ENCODE measurements at regions of chr2 and their contacts with region 1.

Region 1: DNA sequence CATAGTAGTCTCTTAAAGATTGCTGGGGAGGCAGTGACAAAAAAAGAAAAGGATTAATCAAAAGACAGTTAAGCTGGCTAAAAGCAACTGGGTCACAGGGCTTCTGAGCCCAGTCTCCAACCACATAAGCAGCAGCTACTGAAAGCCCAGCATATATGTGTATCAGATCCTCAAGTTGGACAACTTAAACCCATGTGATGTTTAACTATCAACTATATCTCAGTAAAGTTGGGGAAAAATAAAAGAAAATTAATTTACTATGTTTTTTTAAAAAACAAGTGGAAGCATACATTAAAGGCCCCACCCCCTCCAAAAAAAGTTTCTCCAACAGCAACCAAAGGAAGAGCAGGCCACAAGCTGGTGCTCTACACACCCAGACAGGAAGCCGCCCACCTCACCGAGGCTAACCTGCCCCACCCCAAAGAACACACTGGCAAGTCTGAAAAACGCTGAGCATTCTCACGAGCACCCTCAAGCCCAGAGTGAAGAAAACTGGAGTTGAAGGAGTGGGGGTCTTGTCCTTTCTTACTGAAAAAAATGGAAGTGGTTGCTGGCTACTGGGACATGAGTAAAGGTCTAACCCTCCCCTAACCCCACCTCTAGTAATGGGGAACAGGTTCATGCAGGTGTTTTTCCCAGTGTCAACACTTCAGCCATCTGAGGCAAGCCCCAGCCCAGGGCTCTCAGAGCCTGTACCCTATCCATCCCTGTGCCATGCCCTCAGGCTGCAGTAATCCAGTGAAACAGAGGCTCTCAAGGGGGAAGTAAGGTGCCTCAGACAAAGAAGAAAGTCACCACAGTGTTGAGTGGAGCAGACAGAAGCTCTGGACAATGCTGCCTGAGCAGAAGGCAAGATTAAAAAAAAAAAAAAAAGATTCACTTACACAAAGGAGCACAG is 106.3 kb downstream of the GYPC start:
- DNase-seq: peak; percentile 86
- ATAC-seq: peak; percentile 95
- H3K4me3 Mint-ChIP-seq: peak overlapping the region; percentile 20
- H3K27ac Mint-ChIP-seq: peak overlapping the region; percentile 86
- H3K4me1 Mint-ChIP-seq: peaks cover 48% of the 10 kb centered on the region
- H3K27me3 Mint-ChIP-seq: no peaks in the 10 kb centered on the region
- CTCF ChIP-seq: no peak

Region 2: GRCh38 chr2:124959582-124959981 is 1802.6 kb before region 1 on chr2:
- CTCF ChIA-PET with region 1: no interaction called
- POLR2A ChIA-PET with region 1: no interaction called
- intact Hi-C with region 1: no loop called
- DNase-seq: no peak
- ATAC-seq: no peak
- H3K4me3 Mint-ChIP-seq: no peak overlapping the region
- H3K27ac Mint-ChIP-seq: no peak overlapping the region
- H3K4me1 Mint-ChIP-seq: no peaks in the 10 kb centered on the region
- H3K27me3 Mint-ChIP-seq: no peaks in the 10 kb centered on the region
- CTCF ChIP-seq: no peak

Region 3: GRCh38 chr2:126664234-126664633 is 98.0 kb before region 1 on chr2:
- CTCF ChIA-PET with region 1: no interaction called
- POLR2A ChIA-PET with region 1: interaction called, 3 read pairs
- intact Hi-C with region 1: loop called (anchors 5 kb)
- DNase-seq: peak; percentile 75
- ATAC-seq: peak; percentile 82
- H3K4me3 Mint-ChIP-seq: peak overlapping the region; percentile 68
- H3K27ac Mint-ChIP-seq: peak overlapping the region; percentile 94
- H3K4me1 Mint-ChIP-seq: peaks cover 94% of the 10 kb centered on the region
- H3K27me3 Mint-ChIP-seq: no peaks in the 10 kb centered on the region
- CTCF ChIP-seq: no peak

Region 4: DNA sequence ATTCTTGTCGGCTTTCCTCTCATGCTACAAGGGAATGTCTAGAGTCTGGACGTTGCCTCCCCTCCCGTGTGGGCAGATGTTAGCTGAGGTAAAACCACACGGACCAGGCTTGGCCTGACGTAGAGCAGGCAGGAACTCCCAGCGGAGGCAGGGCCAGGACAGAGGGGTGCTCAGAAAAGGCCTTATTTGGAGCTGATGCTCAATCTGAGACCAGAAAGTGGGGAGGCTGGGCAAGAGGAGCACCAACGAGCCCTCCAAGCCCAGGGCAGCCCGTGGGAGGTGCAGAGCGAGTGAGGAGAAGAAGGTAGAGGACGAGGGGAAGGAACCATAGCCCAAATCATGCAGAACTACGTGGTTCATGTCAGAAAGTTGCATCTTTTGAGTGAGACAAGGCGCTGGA is 145.4 kb after region 1 on chr2:
- CTCF ChIA-PET with region 1: no interaction called
- POLR2A ChIA-PET with region 1: no interaction called
- intact Hi-C with region 1: no loop called
- DNase-seq: no peak
- ATAC-seq: no peak
- H3K4me3 Mint-ChIP-seq: no peak overlapping the region
- H3K27ac Mint-ChIP-seq: no peak overlapping the region
- H3K4me1 Mint-ChIP-seq: no peaks in the 10 kb centered on the region
- H3K27me3 Mint-ChIP-seq: peaks cover 3% of the 10 kb centered on the region
- CTCF ChIP-seq: no peak